ENCODE measurements at regions of chr17 and their contacts with region 1.

Region 1: DNA sequence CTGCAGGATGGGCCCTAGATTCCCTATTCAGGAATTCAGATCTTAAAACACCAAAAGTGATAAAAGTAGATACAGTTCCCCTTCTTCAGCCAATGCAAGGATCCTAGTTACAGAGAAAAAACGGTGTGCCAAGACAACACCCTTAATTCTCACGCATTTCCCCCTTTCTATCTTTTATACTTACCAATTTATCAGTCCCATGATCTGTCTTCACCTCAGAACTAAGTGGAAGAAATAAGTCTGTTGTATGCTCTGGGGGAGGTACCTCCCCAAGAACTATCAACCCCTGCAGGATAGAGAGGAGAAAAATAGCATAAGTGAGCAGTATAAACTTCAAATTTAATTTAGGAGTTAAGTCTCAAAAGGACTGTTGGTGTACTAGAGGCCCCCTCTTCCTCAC is 83.2 kb downstream of the STH start:
- DNase-seq: no peak
- ATAC-seq: no peak
- H3K4me3 ChIP-seq: no peak overlapping the region
- H3K27ac ChIP-seq: no peak overlapping the region
- H3K4me1 ChIP-seq: peaks cover 2% of the 10 kb centered on the region; the same call in 1 of the 2 replicates
- H3K27me3 ChIP-seq: no peaks in the 10 kb centered on the region
- CTCF ChIP-seq: no peak
- POLR2A ChIP-seq: no peak
- RAD21 ChIP-seq: no peak

Region 2: DNA sequence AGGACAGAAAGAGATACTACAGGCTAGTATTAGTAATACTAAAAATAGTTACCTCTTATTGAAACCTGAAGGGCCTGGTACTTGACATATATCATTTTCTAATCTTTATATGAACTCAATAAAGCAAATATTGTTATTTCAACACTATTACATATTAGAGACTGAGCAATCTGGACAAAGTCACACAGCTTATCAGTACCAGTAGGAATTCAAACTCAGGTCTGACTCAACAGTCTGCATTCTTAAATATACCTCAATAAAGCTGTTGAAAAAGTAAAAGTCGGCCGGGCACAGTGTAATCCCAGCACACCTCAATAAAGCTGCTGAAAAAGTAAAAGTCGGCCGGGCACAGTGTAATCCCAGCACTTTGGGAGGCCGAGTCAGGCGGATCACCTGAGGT is 43.6 kb after region 1 on chr17:
- CTCF ChIA-PET with region 1: no interaction called
- POLR2A ChIA-PET with region 1: no interaction called
- dilution Hi-C with region 1: no loop called
- in situ Hi-C with region 1: no loop called
- intact Hi-C with region 1: loop called (anchors 5 kb)
- DNase-seq: peak; percentile 55
- ATAC-seq: no peak; the same call in 1 of the 2 replicates
- H3K4me3 ChIP-seq: no peak overlapping the region
- H3K27ac ChIP-seq: no peak overlapping the region
- H3K4me1 ChIP-seq: peaks cover 12% of the 10 kb centered on the region
- H3K27me3 ChIP-seq: no peaks in the 10 kb centered on the region
- CTCF ChIP-seq: no peak
- POLR2A ChIP-seq: no peak
- RAD21 ChIP-seq: no peak